ENCODE measurements at regions of chr6 and their contacts with region 1.

Region 1: GRCh38 chr6:24855395-24856245 is 56.9 kb upstream of the ARMH2 start:
- DNase-seq: peak; percentile 58
- ATAC-seq: peak; percentile 73

Region 2: GRCh38 chr6:24991810-24992467 is 136.3 kb after region 1 on chr6:
- intact Hi-C with region 1: loop called (anchors 2 kb)
- DNase-seq: peak; percentile 34
- ATAC-seq: peak; percentile 78

Region 3: GRCh38 chr6:25070547-25071366 is 215.1 kb after region 1 on chr6:
- intact Hi-C with region 1: loop called (anchors 5 kb)
- DNase-seq: peak; percentile 68
- ATAC-seq: peak; percentile 75

Region 4: GRCh38 chr6:25637960-25638434 is 782.4 kb after region 1 on chr6:
- intact Hi-C with region 1: no loop called
- DNase-seq: no peak
- ATAC-seq: no peak

Measured in left ventricle myocardium superior (tissue), 1 donor.